Activated CD8-positive, alpha-beta T cell treated with anti-CD3 and anti-CD28 coated beads, Interleukin-2, amount 10 ng/mL, durations not matched to agents 7 days and 5 days (primary cell): ENCODE measurements at regions of chr7 and their contacts with region 1.

Region 1: GRCh38 chr7:105589356-105590077 is 8.2 kb upstream of the EFCAB10 start:
- DNase-seq: peak; percentile 75
- ATAC-seq: peak; percentile 96
- H3K4me3 Mint-ChIP-seq: no peak overlapping the region
- H3K27ac Mint-ChIP-seq: no peak overlapping the region
- H3K4me1 Mint-ChIP-seq: peaks cover 24% of the 10 kb centered on the region
- H3K27me3 Mint-ChIP-seq: peaks cover 2% of the 10 kb centered on the region

Region 2: DNA sequence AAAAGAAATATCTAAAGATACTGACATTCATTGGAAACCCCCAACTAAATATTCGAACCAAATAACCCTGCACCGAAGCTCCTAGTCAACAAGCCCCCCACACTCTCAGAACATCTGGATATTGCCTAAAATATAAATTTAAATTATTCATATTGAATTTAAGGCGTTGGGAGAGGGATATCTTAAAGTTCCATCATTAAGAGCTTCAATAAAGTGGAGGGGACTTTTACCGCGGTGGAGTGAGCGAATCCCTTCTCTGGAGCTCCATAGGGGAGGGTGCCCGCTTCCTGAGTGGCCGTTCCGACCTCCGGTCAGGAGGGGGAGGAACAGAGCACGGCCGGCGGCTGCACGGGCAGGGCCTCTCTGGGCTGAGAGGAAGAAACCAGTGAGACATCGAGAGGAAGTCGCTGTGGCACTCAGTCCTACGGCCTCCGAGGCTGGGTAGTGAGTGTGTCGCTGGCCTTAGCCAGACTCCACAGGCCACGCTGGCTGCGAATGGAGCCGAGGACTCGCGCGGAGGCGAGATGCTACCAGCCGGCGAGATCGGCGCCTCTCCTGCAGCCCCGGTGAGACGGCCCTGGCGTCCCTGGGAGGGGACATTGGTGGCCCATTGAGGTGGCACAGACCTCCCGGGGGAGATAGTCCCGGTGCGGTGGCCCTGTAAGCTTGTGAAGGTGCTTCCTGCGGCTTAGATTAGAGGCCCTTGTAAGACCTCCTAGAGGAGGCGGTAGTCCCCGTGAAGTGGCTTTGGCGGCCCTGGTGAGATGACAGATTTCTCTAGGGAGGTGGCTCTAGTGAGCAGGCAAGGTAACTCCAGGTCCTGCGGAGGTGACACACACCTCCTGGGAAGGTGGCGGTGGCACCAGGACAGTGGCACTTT is 57.5 kb before region 1 on chr7 and contains the start of gene RINT1:
- CTCF ChIA-PET with region 1: interaction called, 19 read pairs
- POLR2A ChIA-PET with region 1: interaction called, 4 read pairs
- DNase-seq: peak; percentile 93
- ATAC-seq: peak; percentile 93
- H3K4me3 Mint-ChIP-seq: peak within 1 kb of the TSS; percentile 78
- H3K27ac Mint-ChIP-seq: peak within 1 kb of the TSS; percentile 91
- H3K4me1 Mint-ChIP-seq: peaks cover 24% of the 10 kb centered on the region
- H3K27me3 Mint-ChIP-seq: no peaks in the 10 kb centered on the region
- total RNA-seq, gene RINT1: 21.1 to 21.9 TPM

Region 3: DNA sequence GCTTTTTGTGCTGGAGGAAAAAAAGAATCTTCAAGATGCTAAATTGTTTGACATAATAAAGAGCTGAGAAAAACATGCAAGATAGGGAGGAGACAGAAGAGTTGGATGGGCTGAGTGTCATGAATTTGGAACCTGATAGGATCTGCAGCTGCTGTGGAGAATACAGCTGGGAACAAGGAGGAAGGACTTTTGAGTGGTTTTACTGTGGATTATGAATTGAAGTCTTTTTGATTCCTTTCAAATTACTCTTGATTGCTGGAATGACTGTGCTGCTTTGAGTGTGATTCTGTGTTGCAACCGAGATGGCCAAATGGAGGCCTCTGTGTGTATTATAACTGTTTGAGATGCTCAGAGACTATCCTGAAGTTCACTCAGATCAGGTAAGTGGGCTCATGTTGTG is 12.3 kb before region 1 on chr7:
- CTCF ChIA-PET with region 1: interaction called, 13 read pairs
- POLR2A ChIA-PET with region 1: no interaction called
- DNase-seq: no peak
- ATAC-seq: no peak
- H3K4me3 Mint-ChIP-seq: no peak overlapping the region
- H3K27ac Mint-ChIP-seq: no peak overlapping the region
- H3K4me1 Mint-ChIP-seq: peaks cover 8% of the 10 kb centered on the region
- H3K27me3 Mint-ChIP-seq: no peaks in the 10 kb centered on the region

Region 4: DNA sequence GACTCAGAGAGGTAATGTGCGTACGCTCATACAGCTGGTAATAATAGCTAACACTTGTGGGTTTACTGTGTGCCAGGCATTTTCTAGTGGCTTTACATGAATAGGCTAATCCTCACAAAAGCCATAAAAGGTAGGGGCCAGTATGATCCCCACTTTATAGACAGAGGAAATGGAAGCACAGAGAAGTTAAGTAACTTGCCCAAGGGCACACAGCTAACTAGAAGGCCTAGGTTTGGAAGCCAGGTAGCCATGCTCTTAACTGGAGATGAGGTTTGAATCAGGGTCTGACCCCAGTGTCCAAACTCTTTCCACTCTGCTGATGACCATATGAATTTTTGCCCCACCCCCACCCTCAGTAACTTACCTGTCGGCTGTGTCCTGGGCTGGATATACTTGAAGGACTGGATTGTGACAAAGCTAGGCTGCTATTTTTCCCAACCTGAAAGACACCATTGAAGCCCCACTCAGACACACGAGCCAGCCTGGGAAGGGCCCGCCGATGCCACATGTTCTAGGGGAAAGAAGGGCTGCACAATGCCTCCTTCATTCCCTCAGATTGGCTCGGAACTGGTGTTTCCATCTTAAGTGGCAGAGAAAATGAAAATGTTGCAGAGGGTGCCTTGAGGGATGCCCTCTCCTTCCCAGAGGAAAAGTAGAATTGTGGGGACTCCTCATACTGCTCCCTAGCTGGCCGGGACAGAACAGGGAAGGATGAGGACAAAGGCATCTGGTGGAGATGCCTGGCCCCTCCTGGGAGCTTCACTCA is 20.8 kb after region 1 on chr7:
- CTCF ChIA-PET with region 1: no interaction called
- POLR2A ChIA-PET with region 1: no interaction called
- DNase-seq: no peak
- ATAC-seq: no peak
- H3K4me3 Mint-ChIP-seq: no peak overlapping the region
- H3K27ac Mint-ChIP-seq: no peak overlapping the region
- H3K4me1 Mint-ChIP-seq: no peaks in the 10 kb centered on the region
- H3K27me3 Mint-ChIP-seq: no peaks in the 10 kb centered on the region